ENCODE measurements at regions of chr11 and their contacts with region 1.

Region 1: DNA sequence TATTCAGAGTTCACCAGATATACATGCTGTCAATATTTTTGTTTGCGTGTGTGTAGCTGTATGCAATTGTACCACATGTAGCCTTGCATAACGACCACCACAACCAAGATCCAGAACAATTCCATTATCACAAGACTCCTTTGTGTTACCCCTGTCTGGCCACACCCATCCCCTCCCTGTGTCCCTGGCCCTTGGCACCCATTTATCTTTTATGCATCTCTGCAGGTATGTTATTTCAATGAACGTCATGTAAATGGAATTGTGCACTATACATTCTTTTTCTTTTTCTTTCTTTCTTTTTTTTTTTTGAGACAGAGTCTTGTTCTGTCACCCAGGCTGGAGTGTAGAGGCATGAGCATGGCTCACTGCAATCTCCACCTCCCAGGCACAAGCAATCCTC is 9.7 kb upstream of the PAFAH1B2 start:
- DNase-seq: no peak
- H3K4me3 ChIP-seq: no peak overlapping the region
- H3K4me1 ChIP-seq: no peaks in the 10 kb centered on the region
- H3K27me3 ChIP-seq: no peaks in the 10 kb centered on the region

Region 2: GRCh38 chr11:117205211-117205818 is 70.9 kb after region 1 on chr11:
- in situ Hi-C with region 1: loop called (anchors 5 kb)
- DNase-seq: no peak
- H3K4me3 ChIP-seq: no peak overlapping the region
- H3K4me1 ChIP-seq: no peaks in the 10 kb centered on the region
- H3K27me3 ChIP-seq: no peaks in the 10 kb centered on the region

Region 3: GRCh38 chr11:117704395-117705100 is 570.1 kb after region 1 on chr11:
- in situ Hi-C with region 1: no loop called
- DNase-seq: no peak
- H3K4me3 ChIP-seq: no peak overlapping the region
- H3K4me1 ChIP-seq: peaks cover 7% of the 10 kb centered on the region
- H3K27me3 ChIP-seq: peaks cover 5% of the 10 kb centered on the region; the same call in 1 of the 2 replicates